ENCODE measurements at regions of chr6 and their contacts with region 1.

Region 1: GRCh38 chr6:57316581-57317059 is 810 bp upstream of the PRIM2 start:
- DNase-seq: peak; percentile 85
- H3K4me3 ChIP-seq: peak overlapping the region; percentile 95
- H3K27ac ChIP-seq: peak overlapping the region; percentile 43
- H3K27me3 ChIP-seq: no peaks in the 10 kb centered on the region
- CTCF ChIP-seq: peak; percentile 79

Region 2: DNA sequence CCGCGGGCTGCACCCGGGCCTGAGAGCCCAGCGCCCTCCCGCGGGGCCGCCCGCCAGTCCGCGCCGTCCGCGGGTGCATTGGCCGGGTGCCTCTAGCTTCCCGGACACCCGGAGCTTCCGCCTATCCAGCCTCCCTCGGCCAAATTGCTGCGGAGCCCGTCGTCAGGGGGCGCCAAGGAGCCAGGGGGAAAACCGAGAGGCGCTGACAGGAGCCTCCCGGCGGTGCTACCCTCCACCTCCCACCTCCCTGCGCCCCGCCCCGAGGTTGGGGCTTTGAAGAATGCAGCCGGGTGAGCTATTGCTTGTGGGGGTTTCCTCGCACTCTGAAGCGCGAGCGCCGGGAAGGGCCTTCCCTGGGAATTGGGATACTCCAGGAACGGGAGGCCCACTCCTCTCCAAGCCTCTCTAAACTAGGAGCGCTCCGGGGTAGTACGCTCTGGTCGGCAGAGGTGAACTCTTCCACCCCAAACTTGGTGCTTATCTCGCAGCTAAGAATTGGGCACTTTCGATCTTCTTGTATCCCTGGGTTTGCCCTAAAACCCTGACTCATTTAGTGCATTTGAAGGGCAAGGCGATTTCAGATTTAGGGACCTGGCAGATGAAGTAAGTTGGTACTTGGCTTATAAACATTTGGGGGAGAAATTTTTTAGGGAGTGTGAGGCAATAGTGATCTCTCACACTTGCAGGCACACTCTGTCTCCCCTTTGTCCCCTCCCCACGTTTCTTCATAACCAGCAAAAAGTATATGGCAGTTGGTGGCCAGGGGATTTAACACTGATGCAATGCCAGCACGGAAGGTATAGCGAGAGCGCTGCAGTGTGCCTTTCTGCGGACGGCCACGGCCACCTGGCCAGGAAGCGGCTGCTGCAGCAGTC is 361.2 kb before region 1 on chr6:
- CTCF ChIA-PET with region 1: interaction called, 13 read pairs
- POLR2A ChIA-PET with region 1: no interaction called
- DNase-seq: peak; percentile 79
- H3K4me3 ChIP-seq: peak overlapping the region; percentile 73
- H3K27ac ChIP-seq: peak overlapping the region; percentile 79
- H3K27me3 ChIP-seq: no peaks in the 10 kb centered on the region
- CTCF ChIP-seq: peak; percentile 87

Region 3: GRCh38 chr6:57177545-57178265 is 138.9 kb before region 1 on chr6:
- CTCF ChIA-PET with region 1: interaction called, 24 read pairs
- POLR2A ChIA-PET with region 1: interaction called, 11 read pairs
- DNase-seq: no peak
- H3K4me3 ChIP-seq: peak overlapping the region; percentile 26
- H3K27ac ChIP-seq: no peak overlapping the region
- H3K27me3 ChIP-seq: no peaks in the 10 kb centered on the region
- CTCF ChIP-seq: no peak

Region 4: GRCh38 chr6:57195457-57195856 is 121.2 kb before region 1 on chr6:
- CTCF ChIA-PET with region 1: interaction called, 109 read pairs
- POLR2A ChIA-PET with region 1: interaction called, 4 read pairs
- DNase-seq: no peak
- H3K4me3 ChIP-seq: no peak overlapping the region
- H3K27ac ChIP-seq: no peak overlapping the region
- H3K27me3 ChIP-seq: no peaks in the 10 kb centered on the region
- CTCF ChIP-seq: no peak

Region 5: DNA sequence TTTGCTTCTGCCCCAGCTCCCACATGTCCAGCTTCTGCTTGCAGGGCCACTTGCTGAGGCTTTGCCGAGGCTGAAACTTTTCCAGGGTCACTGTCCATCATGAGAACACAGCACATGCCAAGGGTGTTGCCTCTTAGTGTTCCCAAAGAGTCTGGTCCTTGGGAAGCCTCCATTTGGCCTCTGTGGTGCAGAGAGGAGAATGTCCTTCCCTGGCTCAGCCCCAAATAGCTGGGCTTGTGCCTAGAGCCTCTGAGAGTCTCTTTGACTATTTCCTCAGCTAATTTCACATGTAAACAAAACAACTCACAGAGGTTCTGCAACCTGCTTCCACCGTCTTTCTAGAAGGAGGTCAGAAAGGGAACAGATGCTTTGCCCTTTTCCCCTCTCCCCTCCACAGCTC is 54.1 kb before region 1 on chr6:
- CTCF ChIA-PET with region 1: interaction called, 73 read pairs
- POLR2A ChIA-PET with region 1: interaction called, 14 read pairs
- DNase-seq: no peak
- H3K4me3 ChIP-seq: no peak overlapping the region
- H3K27ac ChIP-seq: peak overlapping the region; percentile 89
- H3K27me3 ChIP-seq: no peaks in the 10 kb centered on the region
- CTCF ChIP-seq: no peak

Region 6: DNA sequence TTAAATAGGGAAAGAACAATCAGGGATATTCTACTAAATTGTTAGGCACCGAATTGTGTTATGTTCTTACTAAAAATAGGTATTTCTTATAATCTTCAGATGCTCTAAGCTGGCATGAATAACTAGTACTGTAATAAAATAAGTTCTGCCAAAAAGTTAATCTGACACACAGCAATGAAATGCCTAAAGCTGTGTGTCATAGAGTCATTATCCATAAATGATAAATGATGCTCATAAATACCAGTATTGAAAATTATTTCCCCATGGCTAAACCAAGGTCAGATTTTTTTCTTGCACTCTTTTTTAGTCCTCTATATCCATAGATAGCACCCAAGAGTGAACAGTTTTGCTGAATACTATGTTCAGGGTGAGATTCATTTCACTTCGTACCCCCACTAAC is 10.9 kb before region 1 on chr6:
- CTCF ChIA-PET with region 1: interaction called, 11 read pairs
- POLR2A ChIA-PET with region 1: interaction called, 4 read pairs
- DNase-seq: no peak
- H3K4me3 ChIP-seq: no peak overlapping the region
- H3K27ac ChIP-seq: no peak overlapping the region
- H3K27me3 ChIP-seq: no peaks in the 10 kb centered on the region
- CTCF ChIP-seq: no peak

Region 7: GRCh38 chr6:57421503-57421902 is 104.9 kb after region 1 on chr6:
- CTCF ChIA-PET with region 1: no interaction called
- POLR2A ChIA-PET with region 1: no interaction called
- DNase-seq: no peak
- H3K4me3 ChIP-seq: no peak overlapping the region
- H3K27ac ChIP-seq: no peak overlapping the region
- H3K27me3 ChIP-seq: no peaks in the 10 kb centered on the region
- CTCF ChIP-seq: no peak